B cell (primary cell): ENCODE measurements at regions of chr9 and their contacts with region 1.

Region 1: DNA sequence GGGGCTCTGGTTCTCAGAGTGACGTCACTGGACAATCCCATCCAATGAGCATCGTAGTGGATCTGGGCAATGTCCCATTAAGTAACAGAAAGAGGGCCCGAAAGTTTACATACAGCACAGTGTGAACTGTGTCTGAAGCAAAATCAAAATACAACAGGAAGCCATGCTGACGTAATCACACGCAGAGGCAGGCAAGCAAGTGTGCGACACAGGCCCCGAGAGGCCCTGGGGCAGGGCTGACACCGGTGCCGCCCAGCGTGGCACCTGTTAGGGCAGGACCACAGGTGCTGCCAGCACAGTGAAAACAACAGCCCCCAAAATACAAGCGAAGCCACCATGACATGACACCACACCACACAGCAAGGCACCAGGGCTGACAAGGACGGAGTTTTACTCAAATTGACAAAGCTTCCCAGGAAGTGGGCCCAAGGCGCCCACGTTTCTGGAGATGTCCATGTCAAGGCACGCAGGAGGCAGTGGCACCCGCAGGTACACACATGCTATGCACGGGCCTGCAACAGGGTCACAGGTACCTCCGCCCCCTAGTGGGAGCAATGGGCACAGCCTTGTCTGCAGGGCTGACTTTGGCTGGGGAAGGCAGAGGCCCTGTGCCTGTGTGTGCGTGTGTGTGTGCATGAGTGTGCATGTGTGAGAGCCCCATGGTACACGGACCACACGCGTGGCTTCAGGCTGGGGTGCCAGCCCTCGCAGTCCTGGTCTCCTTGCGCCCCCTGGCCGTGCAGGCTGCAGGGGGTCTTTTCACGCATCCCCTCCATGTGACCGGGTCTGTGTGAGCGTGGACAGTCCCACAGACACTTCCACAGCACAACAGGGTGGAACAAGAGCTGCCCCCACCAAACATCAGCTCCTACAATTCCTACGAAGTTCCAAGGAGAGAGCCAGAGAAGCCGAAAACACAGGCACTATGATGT is 19.6 kb downstream of the QSOX2 start:
- DNase-seq: peak; percentile 95
- ATAC-seq: peak; percentile 76
- H3K4me3 ChIP-seq: peak overlapping the region in 4 of 5 experiments; percentile 19 to 47 (median 35)
- H3K4me3 Mint-ChIP-seq: peak overlapping the region; percentile 86
- H3K27ac ChIP-seq: peak overlapping the region; percentile 95 to 100
- H3K27ac Mint-ChIP-seq: peak overlapping the region; percentile 98
- H3K4me1 ChIP-seq: peaks cover 40 to 73% of the 10 kb centered on the region in 2 donors
- H3K4me1 Mint-ChIP-seq: peaks cover 79% of the 10 kb centered on the region
- H3K27me3 ChIP-seq: no peaks in the 10 kb centered on the region
- H3K27me3 Mint-ChIP-seq: no peaks in the 10 kb centered on the region
- CTCF ChIP-seq: peak; percentile 94

Region 2: GRCh38 chr9:135830496-135830895 is 395.5 kb before region 1 on chr9:
- CTCF ChIA-PET with region 1: no interaction called
- POLR2A ChIA-PET with region 1: no interaction called
- intact Hi-C with region 1: no loop called
- DNase-seq: no peak
- ATAC-seq: no peak
- H3K4me3 ChIP-seq: no peak overlapping the region
- H3K4me3 Mint-ChIP-seq: no peak overlapping the region
- H3K27ac ChIP-seq: no peak overlapping the region
- H3K27ac Mint-ChIP-seq: no peak overlapping the region
- H3K4me1 ChIP-seq: no peaks in the 10 kb centered on the region
- H3K4me1 Mint-ChIP-seq: peaks cover 2% of the 10 kb centered on the region
- H3K27me3 ChIP-seq: no peaks in the 10 kb centered on the region
- H3K27me3 Mint-ChIP-seq: no peaks in the 10 kb centered on the region
- CTCF ChIP-seq: no peak

Region 3: DNA sequence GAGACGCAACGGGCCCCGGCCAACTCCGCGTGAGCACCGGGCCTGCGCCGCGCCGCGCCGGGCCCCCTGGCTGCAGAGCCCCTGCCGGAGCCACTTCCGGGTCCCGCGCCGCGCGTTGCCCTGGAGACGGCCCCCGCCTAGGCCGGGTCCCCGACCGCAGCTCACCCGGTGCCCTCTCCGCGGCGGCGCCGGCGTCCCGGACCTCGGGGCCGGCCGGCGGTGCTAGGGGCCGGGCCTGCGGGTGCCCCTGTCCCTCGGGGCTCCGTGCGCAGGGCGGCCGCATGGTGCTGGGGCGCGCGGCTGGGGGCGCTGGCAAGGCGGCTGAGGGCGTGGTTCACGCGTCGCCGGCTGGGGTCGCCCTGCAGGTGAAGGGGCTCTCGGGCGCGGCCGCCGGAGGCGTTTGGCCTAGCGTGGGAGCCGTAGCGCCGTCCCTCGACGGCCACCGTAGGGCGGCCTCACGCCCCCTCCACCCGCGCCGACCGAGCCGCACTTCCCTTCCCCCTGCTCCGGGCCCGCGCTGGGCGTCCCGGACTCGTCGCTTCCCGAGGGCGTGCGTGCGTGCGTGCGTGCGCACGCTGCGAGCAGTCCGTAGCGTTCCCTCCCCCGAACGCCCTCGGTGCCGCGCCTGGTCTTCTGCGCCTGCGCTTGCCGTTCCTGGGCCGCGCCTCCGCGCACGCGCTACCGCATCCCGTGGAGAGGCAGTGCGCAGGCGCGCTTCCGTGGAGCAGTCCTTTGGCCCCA is 107.5 kb before region 1 on chr9 and contains the start of gene TMEM250:
- CTCF ChIA-PET with region 1: no interaction called
- POLR2A ChIA-PET with region 1: no interaction called
- intact Hi-C with region 1: loop called (anchors 1 kb)
- DNase-seq: peak; percentile 99
- ATAC-seq: peak; percentile 87
- H3K4me3 ChIP-seq: peak within 1 kb of the TSS; percentile 32 to 76 (median 64)
- H3K4me3 Mint-ChIP-seq: peak within 1 kb of the TSS; percentile 87
- H3K27ac ChIP-seq: peak within 1 kb of the TSS; percentile 51 to 94
- H3K27ac Mint-ChIP-seq: peak within 1 kb of the TSS; percentile 94
- H3K4me1 ChIP-seq: peaks cover 15 to 29% of the 10 kb centered on the region in 2 donors
- H3K4me1 Mint-ChIP-seq: peaks cover 14% of the 10 kb centered on the region
- H3K27me3 ChIP-seq: no peaks in the 10 kb centered on the region
- H3K27me3 Mint-ChIP-seq: no peaks in the 10 kb centered on the region
- CTCF ChIP-seq: no peak
- total RNA-seq, gene TMEM250: 29.6 and 30.4 TPM in 2 replicates

Region 4: GRCh38 chr9:136170006-136170901 is 55.8 kb before region 1 on chr9:
- CTCF ChIA-PET with region 1: interaction called, 22 read pairs
- POLR2A ChIA-PET with region 1: no interaction called
- intact Hi-C with region 1: no loop called
- DNase-seq: peak; percentile 80
- ATAC-seq: peak; percentile 97
- H3K4me3 ChIP-seq: no peak overlapping the region
- H3K4me3 Mint-ChIP-seq: no peak overlapping the region
- H3K27ac ChIP-seq: no peak overlapping the region
- H3K27ac Mint-ChIP-seq: peak overlapping the region; percentile 68
- H3K4me1 ChIP-seq: peaks cover 0 to 15% of the 10 kb centered on the region in 2 donors
- H3K4me1 Mint-ChIP-seq: peaks cover 11% of the 10 kb centered on the region
- H3K27me3 ChIP-seq: peaks cover 0 to 35% (median 4%) of the 10 kb centered on the region in 4 experiments
- H3K27me3 Mint-ChIP-seq: peaks cover 21% of the 10 kb centered on the region
- CTCF ChIP-seq: peak; percentile 85

Region 5: GRCh38 chr9:136189394-136190236 is 36.4 kb before region 1 on chr9:
- CTCF ChIA-PET with region 1: no interaction called
- POLR2A ChIA-PET with region 1: no interaction called
- intact Hi-C with region 1: no loop called
- DNase-seq: no peak
- ATAC-seq: no peak
- H3K4me3 ChIP-seq: no peak overlapping the region
- H3K4me3 Mint-ChIP-seq: no peak overlapping the region
- H3K27ac ChIP-seq: no peak overlapping the region
- H3K27ac Mint-ChIP-seq: no peak overlapping the region
- H3K4me1 ChIP-seq: peaks cover 15 to 23% of the 10 kb centered on the region in 2 donors
- H3K4me1 Mint-ChIP-seq: peaks cover 8% of the 10 kb centered on the region
- H3K27me3 ChIP-seq: peaks cover 0 to 84% (median 25%) of the 10 kb centered on the region in 4 experiments
- H3K27me3 Mint-ChIP-seq: peaks cover 46% of the 10 kb centered on the region
- CTCF ChIP-seq: no peak

Region 6: DNA sequence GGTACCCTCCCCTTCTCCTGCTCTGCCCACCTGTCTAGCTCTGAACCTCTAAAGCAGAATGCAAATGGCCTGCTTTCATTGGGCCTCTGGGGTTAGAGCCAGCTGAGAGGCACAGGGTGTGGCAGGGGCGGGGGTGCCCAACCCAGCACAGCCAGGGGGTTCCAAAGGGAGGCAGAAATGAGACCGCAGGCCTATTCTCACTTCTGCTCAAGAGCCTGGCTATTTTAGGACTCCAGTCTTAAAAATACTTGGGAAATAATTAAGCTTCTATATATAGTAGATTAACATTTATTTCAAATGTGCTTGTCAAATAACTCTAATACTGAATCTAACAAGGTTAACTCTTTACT is 13.9 kb after region 1 on chr9:
- CTCF ChIA-PET with region 1: interaction called, 102 read pairs
- POLR2A ChIA-PET with region 1: interaction called, 53 read pairs
- intact Hi-C with region 1: loop called (anchors 1 kb)
- DNase-seq: peak; percentile 88
- ATAC-seq: peak; percentile 76
- H3K4me3 ChIP-seq: peak overlapping the region in 3 of 5 experiments; percentile 11 to 40 (median 26)
- H3K4me3 Mint-ChIP-seq: peak overlapping the region; percentile 94
- H3K27ac ChIP-seq: peak overlapping the region; percentile 54 to 78
- H3K27ac Mint-ChIP-seq: peak overlapping the region; percentile 90
- H3K4me1 ChIP-seq: peaks cover 72 to 86% of the 10 kb centered on the region in 2 donors
- H3K4me1 Mint-ChIP-seq: peaks cover 89% of the 10 kb centered on the region
- H3K27me3 ChIP-seq: no peaks in the 10 kb centered on the region
- H3K27me3 Mint-ChIP-seq: no peaks in the 10 kb centered on the region
- CTCF ChIP-seq: no peak

Region 7: DNA sequence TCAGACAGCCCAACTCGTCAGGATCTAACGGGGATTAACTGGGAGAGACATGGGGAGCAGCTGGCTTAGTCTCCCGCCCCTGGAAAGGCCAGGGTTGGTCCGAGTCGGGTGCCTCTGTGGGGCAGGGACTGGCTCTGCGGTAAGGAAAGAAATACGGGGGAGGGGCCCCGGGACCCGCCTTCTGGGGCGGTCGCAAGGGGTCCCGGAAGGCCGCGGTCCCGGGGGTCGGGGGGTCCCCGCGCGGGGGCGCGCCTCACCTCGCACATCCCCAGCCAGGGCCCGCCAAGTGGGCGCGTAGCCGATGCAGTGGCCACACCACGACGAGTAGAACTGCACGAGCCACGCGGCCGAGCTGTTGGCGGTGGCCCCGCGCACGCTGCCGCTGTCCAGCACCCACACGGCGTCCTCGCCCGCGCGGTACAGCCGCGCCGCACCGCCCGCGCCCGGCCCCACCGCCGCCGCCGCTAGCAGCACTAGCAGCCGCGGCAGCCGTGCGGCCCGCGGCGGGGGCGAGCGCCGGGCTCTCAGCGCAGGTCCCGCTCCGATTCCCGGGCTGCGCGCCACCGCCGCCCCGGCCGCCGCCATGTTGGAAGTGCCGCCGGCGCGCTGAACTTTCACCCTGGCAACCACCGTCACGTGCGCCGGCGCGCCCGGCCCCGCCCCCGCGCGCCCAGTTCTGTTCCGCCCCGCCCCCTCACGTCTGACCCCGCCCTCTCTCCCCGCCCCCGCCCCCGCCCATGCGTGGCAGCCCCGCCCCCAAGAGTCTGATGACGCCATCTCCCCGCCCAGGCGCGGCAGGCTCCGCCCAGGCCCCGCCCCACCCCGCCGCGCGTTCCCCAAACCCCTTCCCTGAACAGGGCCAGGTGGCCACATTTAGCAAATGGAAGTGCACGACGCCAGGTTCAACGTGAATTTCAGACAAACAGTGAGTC is 19.5 kb after region 1 on chr9 and contains the start of gene QSOX2:
- CTCF ChIA-PET with region 1: interaction called, 102 read pairs
- POLR2A ChIA-PET with region 1: interaction called, 53 read pairs
- intact Hi-C with region 1: loop called (anchors 1 kb)
- DNase-seq: peak; percentile 91
- ATAC-seq: peak; percentile 71
- H3K4me3 ChIP-seq: peak within 1 kb of the TSS; percentile 66 to 97 (median 90)
- H3K4me3 Mint-ChIP-seq: peak within 1 kb of the TSS; percentile 94
- H3K27ac ChIP-seq: peak within 1 kb of the TSS; percentile 70 to 83
- H3K27ac Mint-ChIP-seq: peak within 1 kb of the TSS; percentile 90
- H3K4me1 ChIP-seq: peaks cover 46 to 51% of the 10 kb centered on the region in 2 donors
- H3K4me1 Mint-ChIP-seq: peaks cover 50% of the 10 kb centered on the region
- H3K27me3 ChIP-seq: no peaks in the 10 kb centered on the region
- H3K27me3 Mint-ChIP-seq: no peaks in the 10 kb centered on the region
- CTCF ChIP-seq: no peak
- total RNA-seq, gene QSOX2: 139 and 141 TPM in 2 replicates

Region 8: GRCh38 chr9:136267261-136268111 is 41.5 kb after region 1 on chr9:
- CTCF ChIA-PET with region 1: interaction called, 17 read pairs
- POLR2A ChIA-PET with region 1: interaction called, 10 read pairs
- intact Hi-C with region 1: loop called (anchors 1 kb)
- DNase-seq: peak; percentile 90
- ATAC-seq: peak; percentile 98
- H3K4me3 ChIP-seq: peak overlapping the region in 4 of 5 experiments; percentile 55 to 69 (median 62)
- H3K4me3 Mint-ChIP-seq: peak overlapping the region; percentile 85
- H3K27ac ChIP-seq: peak overlapping the region; percentile 50 to 66
- H3K27ac Mint-ChIP-seq: peak overlapping the region; percentile 84
- H3K4me1 ChIP-seq: peaks cover 7 to 16% of the 10 kb centered on the region in 2 donors
- H3K4me1 Mint-ChIP-seq: peaks cover 11% of the 10 kb centered on the region
- H3K27me3 ChIP-seq: no peaks in the 10 kb centered on the region
- H3K27me3 Mint-ChIP-seq: peaks cover 3% of the 10 kb centered on the region
- CTCF ChIP-seq: peak; percentile 38

Region 9: GRCh38 chr9:136910901-136911245 is 684.9 kb after region 1 on chr9:
- CTCF ChIA-PET with region 1: no interaction called
- POLR2A ChIA-PET with region 1: no interaction called
- intact Hi-C with region 1: no loop called
- DNase-seq: no peak
- ATAC-seq: peak; percentile 43
- H3K4me3 ChIP-seq: no peak overlapping the region
- H3K4me3 Mint-ChIP-seq: no peak overlapping the region
- H3K27ac ChIP-seq: no peak overlapping the region
- H3K27ac Mint-ChIP-seq: no peak overlapping the region
- H3K4me1 ChIP-seq: peaks cover 0 to 2% of the 10 kb centered on the region in 2 donors
- H3K4me1 Mint-ChIP-seq: peaks cover 6% of the 10 kb centered on the region
- H3K27me3 ChIP-seq: no peaks in the 10 kb centered on the region
- H3K27me3 Mint-ChIP-seq: no peaks in the 10 kb centered on the region
- CTCF ChIP-seq: no peak